GM12878 (cell line): ENCODE measurements at regions of chr10 and their contacts with region 1.

Region 1: DNA sequence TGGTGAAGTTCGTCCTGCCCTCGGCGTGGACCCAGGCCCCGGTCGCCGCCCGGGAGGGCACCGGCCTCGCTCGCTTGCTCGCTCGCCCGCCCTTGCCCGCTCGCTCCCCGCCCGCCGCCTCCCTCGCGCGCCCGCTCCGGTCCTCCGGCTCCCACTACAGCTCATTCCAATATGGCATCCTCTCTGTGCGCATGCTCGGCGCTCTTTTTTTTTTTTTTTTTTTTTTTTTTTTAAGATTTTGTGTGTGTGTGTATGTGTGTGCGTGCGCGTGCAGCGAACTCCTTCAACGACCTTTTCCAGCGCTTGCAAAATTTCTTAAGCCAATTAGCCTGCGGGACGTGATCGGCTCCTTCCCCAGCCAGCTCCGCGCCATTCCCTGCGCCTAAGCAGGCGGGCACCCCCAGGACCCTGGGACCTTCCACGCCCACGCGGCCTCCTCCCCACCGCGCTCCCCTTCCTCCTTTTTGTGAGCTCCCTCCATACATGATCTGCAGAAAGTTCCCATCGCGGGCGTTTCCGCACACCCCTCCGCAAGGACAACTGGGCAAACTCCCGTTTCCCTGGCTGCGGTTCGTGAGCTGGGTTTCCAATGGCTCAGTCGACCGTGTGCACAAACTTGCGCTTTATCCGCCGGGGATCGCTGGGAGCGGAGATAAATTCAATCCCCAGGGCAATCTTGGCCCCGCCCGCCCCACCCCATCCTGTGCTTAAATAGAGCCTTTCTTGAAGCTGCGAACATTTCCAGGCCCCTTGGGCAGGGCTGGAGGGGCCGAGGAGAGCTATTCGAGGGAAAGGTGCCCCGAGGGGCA is at the start of gene SFMBT2:
- DNase-seq: no peak
- ATAC-seq: peak; percentile 59
- H3K4me3 ChIP-seq: peak within 1 kb of the TSS; percentile 100
- H3K27ac ChIP-seq: peak within 1 kb of the TSS; percentile 86
- H3K4me1 ChIP-seq: peaks cover 15% of the 10 kb centered on the region
- H3K27me3 ChIP-seq: no peaks in the 10 kb centered on the region
- CTCF ChIP-seq: 0 out of 6 replicates have a peak, but pooled peaks of 1 of the 3 experiments have one; percentile 7
- EP300 ChIP-seq: no peak
- POLR2A ChIP-seq: no peak; the same call in 1 of the 2 replicates
- RAD21 ChIP-seq: 0 out of 2 replicates have a peak, but pooled peaks have one; percentile 9
- polyA plus RNA-seq, gene SFMBT2: 2.8 to 4.3 TPM

Region 2: DNA sequence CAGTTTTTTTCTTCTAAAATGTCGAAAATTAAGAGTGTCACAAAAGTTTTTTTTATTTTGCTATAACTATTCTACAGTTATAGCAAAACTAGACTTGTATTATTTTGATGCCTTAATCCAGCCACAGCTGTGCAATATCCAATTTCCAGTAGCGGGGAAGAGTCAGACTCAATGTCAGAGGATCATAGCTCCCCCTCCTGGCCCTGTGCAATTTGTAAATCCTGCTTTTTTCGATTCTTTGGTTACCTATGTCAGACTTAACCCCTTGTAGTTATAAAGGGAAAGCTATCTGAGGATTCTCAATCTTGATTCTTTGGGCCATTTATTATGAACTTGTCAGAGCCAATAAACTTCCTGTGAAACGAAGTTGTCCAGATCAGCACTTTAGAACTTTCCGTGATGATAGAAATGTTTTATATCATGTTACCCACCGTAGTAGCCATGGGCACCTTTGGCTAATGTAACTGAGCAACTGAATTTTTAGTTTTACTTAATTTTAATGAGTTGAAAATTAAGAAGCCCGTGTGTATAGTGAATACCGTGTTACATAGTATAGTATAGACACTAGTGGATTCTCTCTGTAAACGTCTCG is 743.3 kb before region 1 on chr10:
- CTCF ChIA-PET with region 1: interaction called, 4 read pairs
- POLR2A ChIA-PET with region 1: no interaction called
- RAD21 ChIA-PET with region 1: no interaction called
- SMC1A ChIA-PET with region 1: no interaction called
- in situ Hi-C with region 1: loop called (anchors 25 kb)
- intact Hi-C with region 1: no loop called
- DNase-seq: no peak
- ATAC-seq: peak; percentile 36; the same call in 1 of the 3 replicates
- H3K4me3 ChIP-seq: no peak overlapping the region
- H3K27ac ChIP-seq: no peak overlapping the region
- H3K4me1 ChIP-seq: no peaks in the 10 kb centered on the region
- H3K27me3 ChIP-seq: peaks cover 0 to 1% of the 10 kb centered on the region in 2 experiments; a peak in 2 of 4 replicates
- CTCF ChIP-seq: peak; percentile 30 to 52 (median 34); a peak in 5 of 6 replicates
- EP300 ChIP-seq: no peak
- POLR2A ChIP-seq: no peak
- RAD21 ChIP-seq: peak; percentile 33; the same call in 1 of the 2 replicates

Region 3: GRCh38 chr10:7121154-7121810 is 289.8 kb before region 1 on chr10:
- CTCF ChIA-PET with region 1: interaction called, 33 read pairs
- POLR2A ChIA-PET with region 1: interaction called, 5 read pairs
- RAD21 ChIA-PET with region 1: interaction called, 17 read pairs
- SMC1A ChIA-PET with region 1: interaction called, 19 read pairs
- in situ Hi-C with region 1: loop called (anchors 5 kb)
- intact Hi-C with region 1: loop called (anchors 2 kb)
- DNase-seq: no peak
- ATAC-seq: peak; percentile 91
- H3K4me3 ChIP-seq: no peak overlapping the region
- H3K27ac ChIP-seq: no peak overlapping the region
- H3K4me1 ChIP-seq: no peaks in the 10 kb centered on the region
- H3K27me3 ChIP-seq: no peaks in the 10 kb centered on the region; a peak in 1 of 4 replicates
- CTCF ChIP-seq: peak; percentile 81 to 82 (median 82)
- EP300 ChIP-seq: no peak
- POLR2A ChIP-seq: no peak
- RAD21 ChIP-seq: peak; percentile 84

Region 4: DNA sequence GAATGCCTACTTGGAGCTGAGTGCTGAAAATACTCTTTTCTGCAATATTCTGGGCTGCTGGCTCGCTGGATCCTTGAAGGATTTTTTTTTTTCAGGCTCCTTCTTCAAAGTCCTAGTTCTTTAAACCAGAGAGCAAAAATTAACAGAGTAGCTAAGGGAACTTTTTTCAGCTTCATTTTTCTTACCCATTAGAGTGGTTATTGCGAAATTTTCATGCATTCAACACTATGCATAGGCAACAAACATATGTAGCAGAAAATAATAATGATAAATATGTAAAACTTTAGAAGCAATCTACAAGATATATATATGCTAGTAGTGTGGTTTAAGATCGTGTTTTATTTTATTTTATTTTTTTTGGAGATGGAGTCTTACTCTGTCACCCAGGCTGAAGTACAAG is 264.9 kb before region 1 on chr10:
- CTCF ChIA-PET with region 1: no interaction called
- POLR2A ChIA-PET with region 1: no interaction called
- RAD21 ChIA-PET with region 1: no interaction called
- SMC1A ChIA-PET with region 1: no interaction called
- in situ Hi-C with region 1: no loop called
- intact Hi-C with region 1: no loop called
- DNase-seq: no peak
- ATAC-seq: no peak
- H3K4me3 ChIP-seq: no peak overlapping the region
- H3K27ac ChIP-seq: no peak overlapping the region
- H3K4me1 ChIP-seq: no peaks in the 10 kb centered on the region
- H3K27me3 ChIP-seq: no peaks in the 10 kb centered on the region; a peak in 1 of 4 replicates
- CTCF ChIP-seq: no peak
- EP300 ChIP-seq: no peak
- POLR2A ChIP-seq: no peak
- RAD21 ChIP-seq: no peak

Region 5: GRCh38 chr10:7424315-7424714 is 13.2 kb after region 1 on chr10:
- CTCF ChIA-PET with region 1: interaction called, 6 read pairs
- POLR2A ChIA-PET with region 1: interaction called, 23 read pairs
- RAD21 ChIA-PET with region 1: interaction called, 13 read pairs
- SMC1A ChIA-PET with region 1: interaction called, 23 read pairs
- in situ Hi-C with region 1: no loop called
- intact Hi-C with region 1: no loop called
- DNase-seq: no peak
- ATAC-seq: no peak
- H3K4me3 ChIP-seq: no peak overlapping the region
- H3K27ac ChIP-seq: no peak overlapping the region
- H3K4me1 ChIP-seq: peaks cover 6% of the 10 kb centered on the region
- H3K27me3 ChIP-seq: no peaks in the 10 kb centered on the region
- CTCF ChIP-seq: no peak
- EP300 ChIP-seq: no peak
- POLR2A ChIP-seq: no peak
- RAD21 ChIP-seq: peak; percentile 28; the same call in 1 of the 2 replicates

Region 6: GRCh38 chr10:7484456-7485243 is 73.6 kb after region 1 on chr10:
- CTCF ChIA-PET with region 1: interaction called, 4 read pairs
- POLR2A ChIA-PET with region 1: interaction called, 4 read pairs
- RAD21 ChIA-PET with region 1: interaction called, 4 read pairs
- SMC1A ChIA-PET with region 1: interaction called, 10 read pairs
- in situ Hi-C with region 1: no loop called
- intact Hi-C with region 1: no loop called
- DNase-seq: peak; percentile 91
- ATAC-seq: peak; percentile 81
- H3K4me3 ChIP-seq: peak overlapping the region; percentile 53
- H3K27ac ChIP-seq: peak overlapping the region; percentile 75
- H3K4me1 ChIP-seq: peaks cover 47% of the 10 kb centered on the region
- H3K27me3 ChIP-seq: no peaks in the 10 kb centered on the region
- CTCF ChIP-seq: no peak
- EP300 ChIP-seq: peak; percentile 78 to 96
- POLR2A ChIP-seq: peak; percentile 30; the same call in 1 of the 2 replicates
- RAD21 ChIP-seq: no peak